CD8-positive, alpha-beta T cell (primary cell): ENCODE measurements at regions of chr10 and their contacts with region 1.

Region 1: GRCh38 chr10:63465293-63466143 is at the start of gene JMJD1C:
- DNase-seq: peak; percentile 24 to 80 (median 59)
- ATAC-seq: peak; percentile 69
- H3K4me3 ChIP-seq: peak within 1 kb of the TSS; percentile 89 to 92
- H3K4me3 Mint-ChIP-seq: peak within 1 kb of the TSS; percentile 89
- H3K27ac ChIP-seq: peak within 1 kb of the TSS; percentile 65 to 79
- H3K27ac Mint-ChIP-seq: peak within 1 kb of the TSS; percentile 91
- H3K4me1 ChIP-seq: peaks cover 8% of the 10 kb centered on the region
- H3K4me1 Mint-ChIP-seq: peaks cover 33% of the 10 kb centered on the region
- H3K27me3 ChIP-seq: no peaks in the 10 kb centered on the region
- H3K27me3 Mint-ChIP-seq: no peaks in the 10 kb centered on the region
- CTCF ChIP-seq: no peak
- total RNA-seq, gene JMJD1C: 377 to 392 TPM

Region 2: DNA sequence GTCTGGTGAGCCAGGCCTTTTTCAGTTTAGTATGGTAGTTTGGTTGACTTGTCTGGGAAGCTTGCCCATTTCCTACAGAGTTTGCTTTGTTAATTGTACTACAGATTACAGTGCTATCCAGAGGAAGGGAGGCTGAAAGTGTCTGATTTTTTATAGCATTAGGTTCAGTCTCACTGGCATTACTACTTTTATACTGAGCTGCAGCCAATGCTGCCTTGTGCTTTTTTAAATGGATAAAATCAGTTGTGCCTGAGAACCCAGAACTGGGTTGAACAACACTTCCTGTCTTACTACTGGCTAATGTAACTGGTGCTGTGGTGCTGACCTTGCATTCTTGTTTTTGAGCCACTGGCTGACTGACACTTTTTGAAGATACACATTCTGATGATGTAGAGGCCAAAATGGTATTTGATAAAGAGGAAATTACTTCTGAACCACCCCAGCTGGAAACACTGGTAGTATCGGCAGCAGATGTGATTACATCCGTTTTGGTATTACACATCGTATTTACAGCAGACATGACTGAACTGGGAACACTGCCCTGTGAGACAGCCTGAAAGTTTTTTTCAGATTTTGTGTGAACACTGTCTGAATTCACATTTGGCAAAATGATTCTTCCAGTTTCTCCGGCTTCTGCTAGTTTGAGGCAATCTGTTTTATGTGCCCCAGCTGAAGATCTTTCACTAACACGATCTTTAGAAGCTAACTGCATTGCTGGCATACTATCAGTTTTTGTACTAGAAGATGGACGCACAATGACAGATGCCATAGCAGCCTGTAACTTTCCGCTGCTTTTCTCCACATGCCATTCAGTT is 258.3 kb before region 1 on chr10:
- CTCF ChIA-PET with region 1: no interaction called
- POLR2A ChIA-PET with region 1: no interaction called
- intact Hi-C with region 1: loop called in 1 of 2 experiments (anchors 5 kb)
- DNase-seq: peak in 2 of 9 experiments; percentile 14 to 34
- ATAC-seq: peak; percentile 20
- H3K4me3 ChIP-seq: no peak overlapping the region
- H3K4me3 Mint-ChIP-seq: peak overlapping the region; percentile 54
- H3K27ac ChIP-seq: peak overlapping the region in 1 of 2 experiments; percentile 36
- H3K27ac Mint-ChIP-seq: peak overlapping the region; percentile 7
- H3K4me1 ChIP-seq: peaks cover 13% of the 10 kb centered on the region
- H3K4me1 Mint-ChIP-seq: peaks cover 65% of the 10 kb centered on the region
- H3K27me3 ChIP-seq: no peaks in the 10 kb centered on the region
- H3K27me3 Mint-ChIP-seq: no peaks in the 10 kb centered on the region
- CTCF ChIP-seq: no peak

Region 3: DNA sequence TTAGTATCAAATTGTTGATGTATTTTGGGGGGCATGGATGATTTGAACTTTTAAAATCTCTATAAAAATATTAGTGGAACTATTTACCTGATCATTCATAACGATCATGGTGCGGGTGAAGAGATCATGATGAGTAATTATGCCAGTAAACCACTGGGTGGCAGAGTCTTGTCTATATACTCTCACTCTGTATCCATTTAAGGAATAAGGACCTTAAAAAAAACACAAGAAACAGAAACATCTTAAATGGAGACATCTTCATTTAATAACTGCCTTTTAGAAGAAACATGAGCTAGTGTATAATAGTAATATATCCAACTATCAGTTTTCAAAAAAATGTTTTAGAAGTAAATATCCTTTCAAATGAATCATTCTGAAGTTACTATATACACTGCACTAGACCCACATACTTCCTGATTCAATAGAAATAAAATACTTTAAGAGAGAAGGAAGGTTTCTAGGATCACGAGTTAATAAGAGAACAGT is 248.4 kb before region 1 on chr10:
- CTCF ChIA-PET with region 1: no interaction called
- POLR2A ChIA-PET with region 1: no interaction called
- intact Hi-C with region 1: loop called (anchors 2 to 5 kb)
- DNase-seq: peak in 3 of 9 experiments; percentile 20 to 77 (median 62)
- ATAC-seq: peak; percentile 86
- H3K4me3 ChIP-seq: no peak overlapping the region
- H3K4me3 Mint-ChIP-seq: no peak overlapping the region
- H3K27ac ChIP-seq: no peak overlapping the region
- H3K27ac Mint-ChIP-seq: no peak overlapping the region
- H3K4me1 ChIP-seq: peaks cover 9% of the 10 kb centered on the region
- H3K4me1 Mint-ChIP-seq: peaks cover 52% of the 10 kb centered on the region
- H3K27me3 ChIP-seq: no peaks in the 10 kb centered on the region
- H3K27me3 Mint-ChIP-seq: no peaks in the 10 kb centered on the region
- CTCF ChIP-seq: peak; percentile 93

Region 4: GRCh38 chr10:63421591-63421990 is 43.9 kb before region 1 on chr10:
- CTCF ChIA-PET with region 1: no interaction called
- POLR2A ChIA-PET with region 1: no interaction called
- intact Hi-C with region 1: loop called in 1 of 2 experiments (anchors 5 kb)
- DNase-seq: peak in 4 of 9 experiments; percentile 7 to 72 (median 47)
- ATAC-seq: peak; percentile 97
- H3K4me3 ChIP-seq: no peak overlapping the region
- H3K4me3 Mint-ChIP-seq: peak overlapping the region; percentile 52
- H3K27ac ChIP-seq: peak overlapping the region; percentile 52 to 54
- H3K27ac Mint-ChIP-seq: peak overlapping the region; percentile 93
- H3K4me1 ChIP-seq: peaks cover 23% of the 10 kb centered on the region
- H3K4me1 Mint-ChIP-seq: peaks cover 56% of the 10 kb centered on the region
- H3K27me3 ChIP-seq: no peaks in the 10 kb centered on the region
- H3K27me3 Mint-ChIP-seq: no peaks in the 10 kb centered on the region
- CTCF ChIP-seq: no peak